ENCODE measurements at regions of chr17 and their contacts with region 1.

Region 1: GRCh38 chr17:81142301-81143199 is 22.8 kb upstream of the PVALEF start:
- DNase-seq: peak; percentile 47 to 86
- H3K4me3 ChIP-seq: no peak overlapping the region
- H3K27ac ChIP-seq: no peak overlapping the region
- H3K4me1 ChIP-seq: peaks cover 0 to 2% (median 0%) of the 10 kb centered on the region in 4 experiments; a peak in 4 of 7 replicates
- H3K27me3 ChIP-seq: no peaks in the 10 kb centered on the region
- CTCF ChIP-seq: peak; percentile 76 to 85 (median 82)
- EP300 ChIP-seq: no peak
- POLR2A ChIP-seq: no peak
- RAD21 ChIP-seq: peak; percentile 66 to 79

Region 2: GRCh38 chr17:81119223-81120148 is 23.1 kb before region 1 on chr17:
- CTCF ChIA-PET with region 1: interaction called, 24 read pairs
- POLR2A ChIA-PET with region 1: no interaction called
- DNase-seq: peak; percentile 82 to 100
- H3K4me3 ChIP-seq: peak overlapping the region; percentile 26 to 66 (median 50)
- H3K27ac ChIP-seq: no peak overlapping the region
- H3K4me1 ChIP-seq: peaks cover 0 to 16% (median 6%) of the 10 kb centered on the region in 4 experiments; a peak in 5 of 7 replicates
- H3K27me3 ChIP-seq: peaks cover 0 to 11% (median 7%) of the 10 kb centered on the region in 4 experiments; a peak in 3 of 7 replicates
- CTCF ChIP-seq: peak; percentile 32 to 54 (median 50)
- EP300 ChIP-seq: peak in 1 of 2 experiments; percentile 53; a peak in 1 of 3 replicates
- POLR2A ChIP-seq: 0 out of 3 replicates have a peak, but pooled peaks of 1 of the 2 experiments have one; percentile 22
- RAD21 ChIP-seq: peak; percentile 19 to 30; a peak in 2 of 4 replicates

Region 3: DNA sequence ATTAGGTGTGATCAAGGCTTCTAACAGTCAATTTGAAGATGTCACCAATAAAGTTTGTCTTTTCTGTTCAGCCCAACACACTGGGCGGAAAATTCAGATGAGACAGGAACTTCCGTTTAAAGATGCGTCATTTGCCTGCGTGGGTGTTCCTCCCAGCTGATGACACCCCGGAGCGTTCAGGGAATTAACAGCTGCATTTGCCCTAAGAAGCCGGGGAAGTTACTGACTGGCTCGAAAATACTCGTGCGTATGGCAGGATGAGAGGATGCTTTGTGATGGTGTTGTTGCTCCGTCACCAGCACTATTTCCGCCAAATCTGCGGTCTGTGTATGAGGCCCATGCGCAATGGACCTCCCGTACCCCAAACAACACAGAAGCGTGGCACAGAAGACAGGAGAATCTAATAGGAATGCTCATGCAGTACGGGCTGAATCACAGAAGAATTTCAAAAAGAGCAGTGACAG is 10.8 kb after region 1 on chr17:
- CTCF ChIA-PET with region 1: interaction called, 21 read pairs
- POLR2A ChIA-PET with region 1: interaction called, 3 read pairs
- DNase-seq: no peak
- H3K4me3 ChIP-seq: no peak overlapping the region
- H3K27ac ChIP-seq: no peak overlapping the region
- H3K4me1 ChIP-seq: no peaks in the 10 kb centered on the region; a peak in 1 of 7 replicates
- H3K27me3 ChIP-seq: no peaks in the 10 kb centered on the region
- CTCF ChIP-seq: no peak
- EP300 ChIP-seq: no peak
- POLR2A ChIP-seq: no peak
- RAD21 ChIP-seq: no peak

Region 4: DNA sequence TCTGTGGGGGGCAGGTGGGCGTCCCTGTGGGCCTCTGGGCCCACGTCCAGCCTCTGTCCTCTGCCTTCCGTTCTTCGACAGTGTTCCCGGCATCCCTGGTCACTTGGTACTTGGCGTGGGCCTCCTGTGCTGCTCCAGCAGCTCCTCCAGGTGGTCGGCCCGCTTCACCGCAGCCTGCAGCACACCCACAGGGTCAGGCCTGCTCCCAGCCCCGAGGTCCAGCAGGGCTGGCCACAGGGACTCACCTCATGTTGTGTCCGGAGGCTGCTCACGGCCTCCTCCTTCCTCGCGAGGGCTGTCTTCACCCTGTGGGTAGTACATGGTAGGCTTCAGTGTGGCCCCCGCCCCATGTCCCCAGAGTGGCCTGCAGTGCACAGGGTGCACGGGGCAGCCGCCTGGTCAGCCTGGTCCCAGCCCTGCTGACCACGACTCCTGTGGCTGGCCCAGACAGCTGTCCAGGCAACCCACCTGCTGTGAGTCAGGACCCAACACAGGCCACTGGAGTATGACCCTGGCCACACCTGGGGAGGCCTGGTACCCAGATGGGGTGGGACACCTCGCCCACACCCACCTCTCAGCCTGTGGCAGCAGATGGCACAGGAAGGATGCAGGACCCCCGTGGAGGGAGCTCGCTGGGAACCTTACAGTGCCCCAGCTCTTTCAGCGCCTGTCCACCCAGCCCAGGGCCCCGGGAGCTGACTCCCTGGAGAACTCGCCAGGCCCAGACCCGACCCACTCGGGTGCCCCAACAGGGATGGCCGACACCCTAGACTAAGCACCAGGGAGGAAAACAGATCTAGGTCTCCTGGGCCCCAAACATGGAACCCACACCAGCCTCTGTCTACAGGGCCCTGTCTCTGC is 47.4 kb after region 1 on chr17:
- CTCF ChIA-PET with region 1: interaction called, 23 read pairs
- POLR2A ChIA-PET with region 1: interaction called, 3 read pairs
- DNase-seq: no peak
- H3K4me3 ChIP-seq: no peak overlapping the region
- H3K27ac ChIP-seq: no peak overlapping the region
- H3K4me1 ChIP-seq: no peaks in the 10 kb centered on the region
- H3K27me3 ChIP-seq: no peaks in the 10 kb centered on the region
- CTCF ChIP-seq: peak; percentile 62 to 69 (median 64)
- EP300 ChIP-seq: no peak
- POLR2A ChIP-seq: no peak
- RAD21 ChIP-seq: peak; percentile 64 to 75

Region 5: DNA sequence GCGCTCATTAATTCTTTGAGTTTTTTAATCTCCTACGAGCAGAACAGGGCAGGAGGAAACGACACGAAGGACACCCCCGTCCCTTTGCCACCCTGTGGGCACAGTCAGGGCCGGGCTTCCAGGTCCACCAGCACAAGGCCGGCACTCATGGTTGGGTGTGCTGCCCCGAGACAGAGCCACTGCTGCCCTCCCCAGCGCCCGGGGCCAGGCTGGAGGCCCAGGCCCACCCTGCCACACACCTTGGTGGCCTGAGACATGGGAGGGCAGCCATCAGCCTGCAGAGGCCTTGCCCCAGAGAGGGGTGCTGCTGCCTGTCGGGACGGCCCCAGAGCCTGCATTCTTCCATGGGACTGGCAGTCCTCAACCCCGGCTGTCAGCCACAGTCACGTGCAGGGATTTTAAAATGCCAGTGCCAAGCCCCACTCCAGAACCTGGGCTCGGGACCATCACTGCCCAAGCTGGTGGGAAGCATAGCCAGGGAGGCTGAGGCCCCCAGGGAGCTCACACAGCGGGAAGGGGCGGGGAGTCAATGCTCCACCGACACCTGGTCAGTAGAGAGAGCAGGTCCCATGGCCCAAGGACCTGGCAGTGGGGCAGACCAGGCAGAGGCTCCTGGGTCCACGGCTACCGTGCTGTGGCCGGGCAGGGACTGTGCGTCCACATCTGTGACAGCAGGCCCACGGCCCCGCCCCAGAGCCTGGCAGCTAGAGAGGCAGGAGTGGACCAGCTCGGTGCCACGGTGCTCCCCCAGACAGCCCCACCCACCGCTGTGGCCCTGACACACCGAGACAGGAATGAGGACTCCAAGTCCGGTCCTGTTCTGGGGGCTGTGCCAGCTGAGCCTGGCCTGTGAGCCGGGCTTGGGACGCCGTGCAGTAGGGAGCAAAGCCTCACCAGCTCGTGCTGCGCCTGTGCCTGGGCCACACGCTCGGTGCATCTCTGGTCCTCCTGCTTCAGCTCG is 52.7 kb after region 1 on chr17:
- CTCF ChIA-PET with region 1: interaction called, 16 read pairs
- POLR2A ChIA-PET with region 1: no interaction called
- DNase-seq: no peak
- H3K4me3 ChIP-seq: no peak overlapping the region
- H3K27ac ChIP-seq: no peak overlapping the region
- H3K4me1 ChIP-seq: no peaks in the 10 kb centered on the region
- H3K27me3 ChIP-seq: no peaks in the 10 kb centered on the region
- CTCF ChIP-seq: no peak
- EP300 ChIP-seq: no peak
- POLR2A ChIP-seq: no peak
- RAD21 ChIP-seq: no peak

Region 6: DNA sequence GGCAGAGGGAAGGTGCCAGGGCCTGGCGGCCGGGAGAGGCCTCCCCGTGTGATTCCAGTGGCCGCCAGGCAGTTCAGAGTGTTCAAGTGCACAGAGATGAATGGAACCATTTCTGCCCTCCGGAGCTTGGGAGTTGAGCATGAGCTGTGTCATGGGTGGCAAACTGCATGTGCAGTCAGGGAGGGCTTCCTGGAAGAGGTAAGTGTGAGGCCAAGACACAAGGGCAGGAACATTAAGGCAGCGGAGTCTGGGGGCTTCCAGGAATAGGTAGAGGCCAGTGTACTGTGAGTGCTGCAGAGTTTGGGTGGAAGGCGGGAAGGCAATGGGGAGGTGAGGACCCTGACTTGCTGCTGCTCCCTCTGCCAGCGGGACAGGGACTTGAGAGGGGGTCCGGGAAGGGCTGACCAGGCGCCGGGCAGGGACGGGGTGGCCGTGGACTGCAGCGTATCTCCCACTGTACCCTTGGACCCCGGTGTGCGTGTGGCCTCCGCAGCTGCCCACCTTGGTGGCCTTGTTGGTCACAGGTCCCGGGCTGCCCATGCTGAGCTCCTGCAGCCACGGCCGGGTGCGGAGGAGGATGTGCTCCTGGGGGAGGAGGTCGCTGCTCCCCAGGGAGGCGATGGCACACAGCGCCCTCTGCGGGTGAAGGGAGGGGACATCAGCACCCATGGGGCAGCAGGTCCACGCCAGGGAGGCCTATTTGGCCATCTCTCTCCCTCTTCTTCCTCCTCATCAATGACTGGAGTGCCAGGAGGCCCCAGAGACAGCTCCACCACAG is 87.7 kb after region 1 on chr17:
- CTCF ChIA-PET with region 1: interaction called, 10 read pairs
- POLR2A ChIA-PET with region 1: no interaction called
- DNase-seq: no peak
- H3K4me3 ChIP-seq: no peak overlapping the region
- H3K27ac ChIP-seq: no peak overlapping the region
- H3K4me1 ChIP-seq: no peaks in the 10 kb centered on the region
- H3K27me3 ChIP-seq: no peaks in the 10 kb centered on the region
- CTCF ChIP-seq: peak; percentile 53 to 83 (median 62)
- EP300 ChIP-seq: no peak
- POLR2A ChIP-seq: no peak
- RAD21 ChIP-seq: peak; percentile 12 to 45; a peak in 3 of 4 replicates

Region 7: GRCh38 chr17:81238817-81239600 is 96.5 kb after region 1 on chr17 and contains the starts of genes NDUFAF8 and TEPSIN:
- CTCF ChIA-PET with region 1: interaction called, 11 read pairs
- POLR2A ChIA-PET with region 1: interaction called, 6 read pairs
- DNase-seq: peak; percentile 91 to 93
- H3K4me3 ChIP-seq: peak within 1 kb of the TSS; percentile 79 to 95 (median 82)
- H3K27ac ChIP-seq: peak within 1 kb of the TSS; percentile 58; the same call in 1 of the 2 replicates
- H3K4me1 ChIP-seq: peaks cover 0 to 12% (median 9%) of the 10 kb centered on the region in 4 experiments; a peak in 5 of 7 replicates
- H3K27me3 ChIP-seq: no peaks in the 10 kb centered on the region
- CTCF ChIP-seq: no peak
- EP300 ChIP-seq: no peak
- POLR2A ChIP-seq: peak in 1 of 2 experiments; percentile 47; a peak in 2 of 3 replicates
- RAD21 ChIP-seq: no peak
- total RNA-seq, gene NDUFAF8: 48.9 and 60.2 TPM in 2 replicates
- total RNA-seq, gene TEPSIN: 22.9 and 26.0 TPM in 2 replicates